Naive thymus-derived CD4-positive, alpha-beta T cell (primary cell): ENCODE measurements at regions of chr9 and their contacts with region 1.

Region 1: GRCh38 chr9:36109071-36109470 is 27.5 kb upstream of the GLIPR2 start:
- DNase-seq: no peak
- ATAC-seq: no peak
- H3K4me3 ChIP-seq: no peak overlapping the region
- H3K4me3 Mint-ChIP-seq: no peak overlapping the region
- H3K27ac ChIP-seq: no peak overlapping the region
- H3K27ac Mint-ChIP-seq: no peak overlapping the region
- H3K4me1 ChIP-seq: no peaks in the 10 kb centered on the region
- H3K4me1 Mint-ChIP-seq: peaks cover 0 to 5% (median 0%) of the 10 kb centered on the region in 7 donors
- H3K27me3 ChIP-seq: no peaks in the 10 kb centered on the region
- H3K27me3 Mint-ChIP-seq: no peaks in the 10 kb centered on the region

Region 2: GRCh38 chr9:35774907-35775635 is 334.0 kb before region 1 on chr9:
- CTCF ChIA-PET with region 1: no interaction called
- POLR2A ChIA-PET with region 1: no interaction called
- intact Hi-C with region 1: no loop called
- DNase-seq: no peak
- ATAC-seq: no peak
- H3K4me3 ChIP-seq: no peak overlapping the region
- H3K4me3 Mint-ChIP-seq: no peak overlapping the region
- H3K27ac ChIP-seq: no peak overlapping the region
- H3K27ac Mint-ChIP-seq: peak overlapping the region in 2 of 9 donors; percentile 58 to 80
- H3K4me1 ChIP-seq: no peaks in the 10 kb centered on the region
- H3K4me1 Mint-ChIP-seq: peaks cover 0 to 19% (median under 1%) of the 10 kb centered on the region in 7 donors
- H3K27me3 ChIP-seq: no peaks in the 10 kb centered on the region
- H3K27me3 Mint-ChIP-seq: no peaks in the 10 kb centered on the region

Region 3: DNA sequence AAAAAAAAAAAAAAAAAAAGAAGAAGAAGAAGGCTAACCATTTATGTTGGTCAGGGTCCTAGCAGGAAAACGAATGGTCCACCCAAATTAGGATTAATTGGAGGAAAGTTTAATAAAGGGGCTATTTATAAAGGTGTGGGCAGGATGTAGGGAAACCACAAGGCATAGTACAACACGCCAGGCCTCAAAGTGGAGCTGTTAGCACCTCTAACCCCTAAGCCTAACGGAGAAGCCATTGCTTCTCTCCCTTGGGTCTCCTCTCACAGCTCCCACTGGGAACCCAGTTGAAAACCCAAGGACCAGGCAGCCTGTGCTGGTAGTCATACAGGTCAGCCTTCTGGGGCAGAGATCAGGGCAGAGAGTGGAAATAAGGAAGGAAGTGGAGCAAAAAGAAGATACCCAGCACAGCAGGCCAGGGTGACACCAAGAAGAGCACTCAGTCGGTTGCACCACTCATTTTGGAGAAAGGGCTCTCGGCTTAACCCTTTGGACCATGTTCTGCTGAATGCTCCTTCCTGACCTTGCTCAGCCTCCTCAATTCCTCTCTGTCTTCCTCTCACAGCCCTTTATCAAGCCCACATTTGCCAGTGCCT is 18.7 kb after region 1 on chr9:
- CTCF ChIA-PET with region 1: interaction called, 5 read pairs
- POLR2A ChIA-PET with region 1: no interaction called
- intact Hi-C with region 1: loop called in 1 of 2 experiments (anchors 2 kb)
- DNase-seq: no peak
- ATAC-seq: peak; percentile 86
- H3K4me3 ChIP-seq: no peak overlapping the region
- H3K4me3 Mint-ChIP-seq: peak overlapping the region in 1 of 10 donors; percentile 57
- H3K27ac ChIP-seq: no peak overlapping the region
- H3K27ac Mint-ChIP-seq: peak overlapping the region in 3 of 9 donors; percentile 26 to 65 (median 56)
- H3K4me1 ChIP-seq: peaks cover 14% of the 10 kb centered on the region in 2 donors
- H3K4me1 Mint-ChIP-seq: peaks cover 18 to 32% (median 29%) of the 10 kb centered on the region in 7 donors
- H3K27me3 ChIP-seq: no peaks in the 10 kb centered on the region
- H3K27me3 Mint-ChIP-seq: peaks cover 0 to 5% (median 0%) of the 10 kb centered on the region in 5 donors